ENCODE measurements at regions of chr19 and their contacts with region 1.

Region 1: DNA sequence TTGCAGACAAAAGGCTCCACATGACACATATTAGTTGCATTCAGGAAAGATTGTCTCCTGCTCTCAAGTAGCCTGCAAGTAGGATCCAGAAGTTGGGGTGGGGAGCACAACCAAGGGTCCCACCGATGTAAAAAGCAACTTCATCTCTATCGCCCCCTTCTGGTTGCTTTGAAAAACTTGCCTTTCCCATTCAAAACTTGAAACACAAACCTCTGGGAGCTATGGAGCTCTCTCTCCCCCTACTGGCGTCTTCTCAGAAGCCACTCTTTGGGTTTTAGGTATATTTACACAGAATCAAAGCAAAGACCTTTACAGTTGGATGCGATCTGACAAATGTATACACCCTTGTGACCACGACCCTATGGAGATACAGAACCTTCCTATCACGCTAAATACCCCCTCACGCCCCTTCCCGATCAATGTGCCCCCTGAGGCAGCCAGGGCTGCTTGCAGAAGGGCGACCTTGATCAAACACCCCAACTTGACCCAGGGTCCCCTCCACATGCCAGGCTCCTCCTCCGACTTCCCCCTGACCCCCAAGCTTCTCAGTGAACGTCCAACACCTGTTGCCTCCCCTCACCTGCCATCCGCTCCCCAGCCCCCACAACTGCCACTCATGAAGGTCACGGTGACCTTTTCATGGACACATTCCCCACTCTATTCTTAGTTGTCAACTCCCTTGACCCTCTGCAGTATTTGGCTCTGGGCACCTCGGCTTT is 10.1 kb downstream of the NOSIP start:
- DNase-seq: peak; percentile 84
- ATAC-seq: peak; percentile 88
- H3K4me3 ChIP-seq: no peak overlapping the region
- H3K27ac ChIP-seq: no peak overlapping the region
- H3K4me1 ChIP-seq: no peaks in the 10 kb centered on the region
- H3K27me3 ChIP-seq: no peaks in the 10 kb centered on the region
- CTCF ChIP-seq: peak; percentile 100
- POLR2A ChIP-seq: 0 out of 2 replicates have a peak, but pooled peaks have one; percentile 39
- RAD21 ChIP-seq: peak; percentile 94

Region 2: GRCh38 chr19:49272184-49272583 is 298.1 kb before region 1 on chr19:
- CTCF ChIA-PET with region 1: no interaction called
- POLR2A ChIA-PET with region 1: no interaction called
- dilution Hi-C with region 1: no loop called
- in situ Hi-C with region 1: loop called (anchors 25 kb)
- intact Hi-C with region 1: no loop called
- DNase-seq: peak; percentile 57
- ATAC-seq: no peak; the same call in 1 of the 2 replicates
- H3K4me3 ChIP-seq: no peak overlapping the region
- H3K27ac ChIP-seq: no peak overlapping the region
- H3K4me1 ChIP-seq: no peaks in the 10 kb centered on the region
- H3K27me3 ChIP-seq: peaks cover 6% of the 10 kb centered on the region
- CTCF ChIP-seq: no peak
- POLR2A ChIP-seq: no peak
- RAD21 ChIP-seq: no peak

Region 3: GRCh38 chr19:49430678-49431329 is 139.5 kb before region 1 on chr19:
- CTCF ChIA-PET with region 1: no interaction called
- POLR2A ChIA-PET with region 1: no interaction called
- dilution Hi-C with region 1: no loop called
- in situ Hi-C with region 1: no loop called
- intact Hi-C with region 1: no loop called
- DNase-seq: no peak
- ATAC-seq: no peak
- H3K4me3 ChIP-seq: no peak overlapping the region
- H3K27ac ChIP-seq: no peak overlapping the region
- H3K4me1 ChIP-seq: no peaks in the 10 kb centered on the region
- H3K27me3 ChIP-seq: peaks cover 95% of the 10 kb centered on the region
- CTCF ChIP-seq: peak; percentile 17; the same call in 1 of the 2 replicates
- POLR2A ChIP-seq: no peak
- RAD21 ChIP-seq: 0 out of 2 replicates have a peak, but pooled peaks have one; percentile 10

Region 4: GRCh38 chr19:49473868-49474544 is 96.3 kb before region 1 on chr19 and contains the start of gene FLT3LG:
- CTCF ChIA-PET with region 1: no interaction called
- POLR2A ChIA-PET with region 1: no interaction called
- dilution Hi-C with region 1: no loop called
- in situ Hi-C with region 1: no loop called
- intact Hi-C with region 1: loop called (anchors 1 kb)
- DNase-seq: peak; percentile 69
- ATAC-seq: peak; percentile 85
- H3K4me3 ChIP-seq: peak within 1 kb of the TSS; percentile 59
- H3K27ac ChIP-seq: peak within 1 kb of the TSS; percentile 49
- H3K4me1 ChIP-seq: peaks cover 11% of the 10 kb centered on the region; the same call in 1 of the 2 replicates
- H3K27me3 ChIP-seq: no peaks in the 10 kb centered on the region
- CTCF ChIP-seq: peak; percentile 97
- POLR2A ChIP-seq: no peak
- RAD21 ChIP-seq: peak; percentile 69
- total RNA-seq, gene FLT3LG: 0.56 and 0.90 TPM in 2 replicates

Region 5: GRCh38 chr19:49502866-49503581 is 67.3 kb before region 1 on chr19:
- CTCF ChIA-PET with region 1: interaction called, 6 read pairs
- POLR2A ChIA-PET with region 1: interaction called, 6 read pairs
- dilution Hi-C with region 1: no loop called
- in situ Hi-C with region 1: no loop called
- intact Hi-C with region 1: loop called (anchors 1 kb)
- DNase-seq: peak; percentile 81
- ATAC-seq: peak; percentile 69
- H3K4me3 ChIP-seq: no peak overlapping the region
- H3K27ac ChIP-seq: peak overlapping the region; percentile 33; the same call in 1 of the 2 replicates
- H3K4me1 ChIP-seq: peaks cover 3% of the 10 kb centered on the region; the same call in 1 of the 2 replicates
- H3K27me3 ChIP-seq: no peaks in the 10 kb centered on the region
- CTCF ChIP-seq: peak; percentile 57
- POLR2A ChIP-seq: no peak
- RAD21 ChIP-seq: peak; percentile 65

Region 6: GRCh38 chr19:50061650-50062049 is 491.4 kb after region 1 on chr19:
- CTCF ChIA-PET with region 1: no interaction called
- POLR2A ChIA-PET with region 1: no interaction called
- dilution Hi-C with region 1: no loop called
- in situ Hi-C with region 1: no loop called
- intact Hi-C with region 1: no loop called
- DNase-seq: no peak
- ATAC-seq: no peak
- H3K4me3 ChIP-seq: no peak overlapping the region
- H3K27ac ChIP-seq: no peak overlapping the region
- H3K4me1 ChIP-seq: no peaks in the 10 kb centered on the region
- H3K27me3 ChIP-seq: no peaks in the 10 kb centered on the region
- CTCF ChIP-seq: no peak
- POLR2A ChIP-seq: no peak
- RAD21 ChIP-seq: no peak